AG04449 (cell line): ENCODE measurements at regions of chr19 and their contacts with region 1.

Region 1: DNA sequence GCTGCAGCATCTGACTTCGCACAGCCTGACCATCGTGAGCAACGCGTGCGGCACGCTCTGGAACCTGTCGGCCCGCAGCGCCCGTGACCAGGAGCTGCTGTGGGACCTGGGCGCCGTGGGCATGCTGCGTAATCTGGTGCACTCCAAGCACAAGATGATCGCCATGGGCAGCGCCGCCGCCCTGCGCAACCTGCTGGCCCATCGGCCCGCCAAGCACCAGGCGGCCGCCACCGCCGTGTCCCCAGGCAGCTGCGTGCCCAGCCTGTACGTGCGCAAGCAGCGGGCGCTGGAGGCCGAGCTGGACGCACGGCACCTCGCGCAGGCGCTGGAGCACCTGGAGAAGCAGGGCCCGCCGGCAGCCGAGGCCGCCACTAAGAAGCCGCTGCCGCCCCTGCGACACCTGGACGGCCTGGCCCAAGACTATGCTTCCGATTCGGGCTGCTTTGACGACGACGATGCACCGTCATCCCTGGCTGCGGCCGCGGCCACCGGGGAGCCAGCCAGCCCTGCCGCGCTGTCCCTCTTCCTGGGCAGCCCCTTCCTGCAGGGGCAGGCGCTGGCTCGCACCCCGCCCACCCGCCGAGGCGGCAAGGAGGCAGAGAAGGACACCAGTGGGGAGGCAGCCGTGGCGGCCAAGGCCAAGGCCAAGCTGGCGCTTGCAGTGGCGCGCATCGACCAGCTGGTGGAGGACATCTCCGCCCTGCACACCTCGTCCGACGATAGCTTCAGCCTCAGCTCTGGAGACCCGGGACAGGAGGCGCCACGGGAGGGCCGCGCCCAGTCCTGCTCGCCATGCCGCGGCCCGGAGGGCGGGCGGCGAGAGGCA is 13.6 kb downstream of the C19orf25 start:
- DNase-seq: no peak
- H3K4me3 ChIP-seq: no peak overlapping the region
- CTCF ChIP-seq: peak; percentile 76

Region 2: GRCh38 chr19:1438035-1438932 is 27.1 kb before region 1 on chr19 and contains the start of gene RPS15:
- CTCF ChIA-PET with region 1: no interaction called
- POLR2A ChIA-PET with region 1: no interaction called
- DNase-seq: peak; percentile 61
- H3K4me3 ChIP-seq: peak within 1 kb of the TSS; percentile 89
- CTCF ChIP-seq: peak; percentile 98

Region 3: GRCh38 chr19:1478934-1479707 is 13.7 kb after region 1 on chr19 and contains the start of gene C19orf25:
- CTCF ChIA-PET with region 1: interaction called, 16 read pairs
- POLR2A ChIA-PET with region 1: interaction called, 3 read pairs
- DNase-seq: peak; percentile 49
- H3K4me3 ChIP-seq: peak within 1 kb of the TSS; percentile 83
- CTCF ChIP-seq: no peak

Region 4: DNA sequence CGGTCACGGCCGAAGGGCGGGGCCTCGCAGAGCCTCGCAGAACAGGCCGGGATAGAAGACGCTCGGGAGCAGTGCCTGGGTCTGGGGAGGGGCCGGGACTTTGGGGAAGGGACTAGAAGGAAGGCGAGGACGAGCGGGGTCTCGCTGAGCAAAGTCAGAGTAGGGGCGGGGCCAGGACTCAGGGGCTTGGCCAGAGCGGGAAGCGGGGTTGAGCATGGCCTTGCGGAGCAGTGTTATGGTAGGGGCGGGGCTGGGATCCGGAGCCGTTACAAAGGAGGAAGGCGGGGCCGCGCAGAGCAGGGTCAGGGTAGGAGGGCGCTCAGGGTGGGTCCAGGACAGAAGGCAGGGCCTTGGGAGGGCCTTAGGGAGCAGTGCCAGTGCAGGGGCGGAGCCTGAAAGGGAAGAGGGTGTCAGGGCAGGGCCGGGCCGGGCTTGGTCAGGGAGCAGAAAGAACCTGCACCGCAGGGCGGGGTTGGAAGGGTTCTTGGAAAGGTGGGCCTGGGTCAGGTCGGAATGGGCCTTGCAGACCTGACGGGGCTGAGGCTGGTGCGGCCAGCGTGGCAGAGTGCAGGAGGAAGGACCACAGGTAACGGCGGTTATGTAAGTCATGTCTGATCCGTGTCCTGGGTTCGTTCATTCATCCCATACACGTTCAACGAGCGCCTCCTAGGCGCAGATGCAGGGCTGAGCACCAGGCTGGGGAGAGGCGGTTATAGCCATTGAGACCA is 347.2 kb after region 1 on chr19:
- CTCF ChIA-PET with region 1: no interaction called
- POLR2A ChIA-PET with region 1: no interaction called
- DNase-seq: peak; percentile 36
- H3K4me3 ChIP-seq: peak overlapping the region; percentile 68
- CTCF ChIP-seq: peak; percentile 69